ENCODE measurements at regions of chr6 and their contacts with region 1.

Region 1: GRCh38 chr6:134529921-134530320 is 212.0 kb upstream of the SGK1 start:
- DNase-seq: peak; percentile 93
- ATAC-seq: peak; percentile 97
- H3K4me3 ChIP-seq: no peak overlapping the region
- H3K27ac ChIP-seq: no peak overlapping the region
- H3K4me1 ChIP-seq: peaks cover 21% of the 10 kb centered on the region
- H3K27me3 ChIP-seq: no peaks in the 10 kb centered on the region
- CTCF ChIP-seq: no peak
- EP300 ChIP-seq: peak; percentile 81 to 95
- POLR2A ChIP-seq: no peak
- RAD21 ChIP-seq: no peak

Region 2: GRCh38 chr6:133952815-133953633 is 576.9 kb before region 1 on chr6 and contains the start of gene TBPL1:
- CTCF ChIA-PET with region 1: no interaction called
- POLR2A ChIA-PET with region 1: no interaction called
- in situ Hi-C with region 1: no loop called
- intact Hi-C with region 1: no loop called
- DNase-seq: peak; percentile 91
- ATAC-seq: peak; percentile 97
- H3K4me3 ChIP-seq: peak within 1 kb of the TSS; percentile 79 to 89 (median 83)
- H3K27ac ChIP-seq: peak within 1 kb of the TSS; percentile 56
- H3K4me1 ChIP-seq: peaks cover 24% of the 10 kb centered on the region
- H3K27me3 ChIP-seq: no peaks in the 10 kb centered on the region; a peak in 1 of 5 replicates
- CTCF ChIP-seq: peak; percentile 16; the same call in 1 of the 2 replicates
- EP300 ChIP-seq: no peak
- POLR2A ChIP-seq: peak; percentile 86 to 88
- RAD21 ChIP-seq: peak; percentile 22; the same call in 1 of the 2 replicates
- total RNA-seq, gene TBPL1: 39.3 and 47.7 TPM in 2 replicates

Region 3: GRCh38 chr6:134517145-134517658 is 12.7 kb before region 1 on chr6:
- CTCF ChIA-PET with region 1: no interaction called
- POLR2A ChIA-PET with region 1: no interaction called
- in situ Hi-C with region 1: no loop called
- intact Hi-C with region 1: loop called (anchors 1 kb)
- DNase-seq: peak; percentile 69
- ATAC-seq: peak; percentile 96
- H3K4me3 ChIP-seq: no peak overlapping the region
- H3K27ac ChIP-seq: no peak overlapping the region
- H3K4me1 ChIP-seq: peaks cover 11% of the 10 kb centered on the region
- H3K27me3 ChIP-seq: peaks cover 0 to 4% of the 10 kb centered on the region in 2 experiments; a peak in 1 of 5 replicates
- CTCF ChIP-seq: no peak
- EP300 ChIP-seq: 0 out of 4 replicates have a peak, but pooled peaks of 1 of the 2 experiments have one; percentile 4
- POLR2A ChIP-seq: no peak
- RAD21 ChIP-seq: no peak

Measured in HepG2 (cell line).